ENCODE measurements at regions of chr6 and their contacts with region 1.

Region 1: GRCh38 chr6:56637640-56638039 is 5.0 kb downstream of the DST start:
- DNase-seq: peak in 3 of 14 experiments; percentile 5 to 28 (median 20)
- ATAC-seq: no peak
- H3K4me3 ChIP-seq: no peak overlapping the region
- H3K4me3 Mint-ChIP-seq: no peak overlapping the region
- H3K27ac ChIP-seq: no peak overlapping the region
- H3K27ac Mint-ChIP-seq: no peak overlapping the region
- H3K4me1 ChIP-seq: no peaks in the 10 kb centered on the region
- H3K4me1 Mint-ChIP-seq: no peaks in the 10 kb centered on the region
- H3K27me3 ChIP-seq: no peaks in the 10 kb centered on the region
- H3K27me3 Mint-ChIP-seq: no peaks in the 10 kb centered on the region
- CTCF ChIP-seq: peak; percentile 38

Region 2: DNA sequence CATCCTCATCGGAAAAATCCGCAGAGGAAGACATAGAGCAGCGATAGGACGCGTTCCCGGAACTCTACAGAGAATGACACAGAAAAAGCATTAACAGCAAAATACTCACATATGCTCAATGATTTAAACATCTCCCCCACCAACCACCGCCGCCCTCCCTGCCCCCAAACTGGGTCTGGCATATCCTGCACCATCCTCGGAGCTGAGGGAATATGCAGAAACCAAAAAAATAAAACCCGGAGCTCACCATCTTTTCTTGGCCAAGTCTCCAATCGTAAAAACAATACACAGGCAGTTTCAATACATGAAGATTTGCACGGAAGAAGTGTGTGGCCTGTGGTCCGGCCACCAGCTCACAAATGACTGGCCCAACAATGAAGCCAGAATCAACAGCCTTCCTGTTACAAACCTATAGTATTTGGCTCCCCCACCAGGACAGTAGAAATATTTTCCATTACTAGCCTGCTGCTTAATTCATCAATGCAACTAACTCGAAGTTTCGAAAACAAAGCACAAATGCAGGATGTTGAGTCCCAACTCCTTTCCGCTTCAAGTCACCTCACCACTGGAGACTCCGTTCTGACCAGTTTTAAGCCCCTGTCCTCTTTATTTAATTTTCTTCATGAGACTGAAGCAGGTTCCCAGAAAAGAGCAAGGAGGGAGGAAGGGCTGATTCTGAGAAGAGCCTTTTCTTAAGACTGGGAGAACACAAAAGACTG is 214.1 kb after region 1 on chr6:
- CTCF ChIA-PET with region 1: no interaction called
- POLR2A ChIA-PET with region 1: no interaction called
- intact Hi-C with region 1: loop called (anchors 2 to 5 kb)
- DNase-seq: peak in 4 of 14 experiments; percentile 5 to 51 (median 47)
- ATAC-seq: peak; percentile 60
- H3K4me3 ChIP-seq: peak overlapping the region; percentile 20
- H3K4me3 Mint-ChIP-seq: peak overlapping the region; percentile 67
- H3K27ac ChIP-seq: no peak overlapping the region
- H3K27ac Mint-ChIP-seq: no peak overlapping the region
- H3K4me1 ChIP-seq: peaks cover 13% of the 10 kb centered on the region
- H3K4me1 Mint-ChIP-seq: peaks cover 18% of the 10 kb centered on the region
- H3K27me3 ChIP-seq: peaks cover 20 to 32% of the 10 kb centered on the region in 2 experiments
- H3K27me3 Mint-ChIP-seq: peaks cover 59% of the 10 kb centered on the region
- CTCF ChIP-seq: peak; percentile 45

Region 3: DNA sequence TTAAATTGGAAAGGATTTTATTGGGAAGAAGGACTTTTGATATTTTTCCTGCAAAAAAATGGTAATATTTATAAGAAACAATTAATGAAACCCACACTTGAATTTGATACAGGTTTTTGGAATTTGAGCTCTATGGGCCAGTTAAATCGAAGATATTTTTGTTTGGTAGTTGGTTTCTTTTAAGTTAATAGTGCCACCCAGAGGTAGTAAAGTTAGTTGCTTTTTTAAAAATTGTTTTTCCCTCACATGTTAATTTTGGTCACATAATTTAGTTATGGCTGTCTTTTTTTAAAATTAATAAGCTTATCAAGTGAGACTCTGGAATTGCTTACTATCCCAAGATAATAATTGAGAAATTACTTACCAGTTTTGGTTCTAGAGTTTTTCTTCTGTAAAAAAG is 686.9 kb after region 1 on chr6:
- CTCF ChIA-PET with region 1: no interaction called
- POLR2A ChIA-PET with region 1: no interaction called
- intact Hi-C with region 1: loop called (anchors 2 to 5 kb)
- DNase-seq: peak in 3 of 14 experiments; percentile 20 to 41 (median 21)
- ATAC-seq: peak; percentile 37
- H3K4me3 ChIP-seq: no peak overlapping the region
- H3K4me3 Mint-ChIP-seq: no peak overlapping the region
- H3K27ac ChIP-seq: no peak overlapping the region
- H3K27ac Mint-ChIP-seq: no peak overlapping the region
- H3K4me1 ChIP-seq: no peaks in the 10 kb centered on the region
- H3K4me1 Mint-ChIP-seq: peaks cover 5% of the 10 kb centered on the region
- H3K27me3 ChIP-seq: no peaks in the 10 kb centered on the region
- H3K27me3 Mint-ChIP-seq: no peaks in the 10 kb centered on the region
- CTCF ChIP-seq: peak; percentile 37

Measured in CD4-positive, alpha-beta T cell (primary cell).